K562 (cell line): ENCODE measurements at regions of chr11 and their contacts with region 1.

Region 1: DNA sequence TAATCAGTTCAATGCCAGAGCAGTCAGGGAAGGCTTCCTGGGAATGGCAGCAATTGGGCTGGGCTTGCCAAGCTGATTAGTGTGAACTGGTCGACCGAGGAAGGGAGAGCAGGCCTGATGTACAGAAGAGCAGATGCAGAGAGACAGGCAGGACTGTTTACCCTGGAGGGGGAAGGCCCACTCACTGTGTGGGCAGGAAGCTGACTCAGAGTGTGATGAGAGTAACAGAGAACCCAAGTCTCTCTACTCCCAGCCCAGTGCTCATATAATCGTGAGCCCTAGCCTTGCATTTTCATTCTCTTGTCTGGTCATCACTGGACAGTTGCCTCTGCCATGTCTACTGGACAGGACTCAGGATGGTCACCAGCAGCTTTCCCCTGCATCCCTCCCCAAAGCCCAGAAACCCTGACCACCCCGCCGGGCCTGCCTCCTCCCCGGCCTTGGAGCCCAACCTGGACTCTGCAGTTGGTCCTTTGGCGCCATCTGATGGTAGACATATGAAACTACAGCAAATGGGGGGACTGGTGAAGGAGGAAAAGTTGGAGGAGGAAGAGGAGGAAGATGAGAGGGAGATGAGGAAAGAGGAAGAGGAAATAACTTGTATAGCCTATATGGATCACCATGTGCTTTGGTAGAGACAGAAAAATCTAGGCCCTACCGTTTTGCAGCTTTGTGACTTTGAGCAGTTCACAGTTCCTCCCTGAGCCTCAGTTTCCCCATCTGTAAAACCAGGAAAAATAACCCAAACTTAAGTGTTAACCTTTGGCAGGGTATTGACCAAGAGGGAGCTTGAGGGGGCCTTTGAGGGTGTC is 43.4 kb upstream of the PRDM11 start:
- DNase-seq: peak; percentile 70 to 85 (median 80)
- ATAC-seq: peak; percentile 80
- H3K4me3 ChIP-seq: no peak overlapping the region
- H3K27ac ChIP-seq: no peak overlapping the region
- H3K4me1 ChIP-seq: no peaks in the 10 kb centered on the region; a peak in 1 of 5 replicates
- H3K27me3 ChIP-seq: peaks cover 0 to 12% of the 10 kb centered on the region in 2 experiments; a peak in 2 of 5 replicates
- CTCF ChIP-seq: peak; percentile 88 to 90 (median 88)
- EP300 ChIP-seq: no peak
- POLR2A ChIP-seq: no peak
- RAD21 ChIP-seq: peak; percentile 91 to 94

Region 2: GRCh38 chr11:44927174-44927661 is 175.8 kb before region 1 on chr11:
- CTCF ChIA-PET with region 1: interaction called, 12 read pairs
- POLR2A ChIA-PET with region 1: no interaction called
- in situ Hi-C with region 1: loop called (anchors 5 kb)
- intact Hi-C with region 1: loop called (anchors 1 kb)
- DNase-seq: peak; percentile 70 to 82 (median 78)
- ATAC-seq: peak; percentile 94
- H3K4me3 ChIP-seq: no peak overlapping the region
- H3K27ac ChIP-seq: no peak overlapping the region
- H3K4me1 ChIP-seq: peaks cover 0 to 2% of the 10 kb centered on the region in 2 experiments; a peak in 1 of 5 replicates
- H3K27me3 ChIP-seq: peaks cover 0 to 35% of the 10 kb centered on the region in 2 experiments; a peak in 2 of 5 replicates
- CTCF ChIP-seq: peak; percentile 80 to 86 (median 82)
- EP300 ChIP-seq: no peak
- POLR2A ChIP-seq: no peak
- RAD21 ChIP-seq: peak; percentile 28 to 73; a peak in 3 of 4 replicates

Region 3: DNA sequence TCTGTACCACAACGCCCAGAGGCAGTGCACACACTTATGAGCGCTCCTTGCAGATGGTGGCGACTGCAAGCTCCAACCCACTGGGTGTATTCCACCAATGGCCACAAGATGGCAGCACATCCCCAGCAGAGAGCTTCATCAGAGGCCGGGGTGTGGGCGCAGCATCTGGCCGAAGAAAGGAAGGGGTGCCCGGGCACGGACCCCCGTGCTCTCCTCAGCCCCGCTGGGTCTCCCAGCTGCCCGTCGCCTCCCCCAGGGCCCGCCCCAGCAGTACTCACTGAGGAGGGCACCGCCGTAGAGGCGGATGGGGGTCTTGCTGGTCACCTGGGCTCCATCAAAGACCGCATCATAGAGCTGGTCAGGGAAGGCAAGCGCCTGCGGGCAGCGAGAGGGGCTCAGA is 166.5 kb before region 1 on chr11:
- CTCF ChIA-PET with region 1: interaction called, 43 read pairs
- POLR2A ChIA-PET with region 1: interaction called, 10 read pairs
- in situ Hi-C with region 1: no loop called
- intact Hi-C with region 1: loop called (anchors 1 kb)
- DNase-seq: peak; percentile 75 to 83 (median 82)
- ATAC-seq: peak; percentile 92
- H3K4me3 ChIP-seq: no peak overlapping the region
- H3K27ac ChIP-seq: no peak overlapping the region
- H3K4me1 ChIP-seq: peaks cover 0 to 11% of the 10 kb centered on the region in 2 experiments; a peak in 1 of 5 replicates
- H3K27me3 ChIP-seq: peaks cover 0 to 23% of the 10 kb centered on the region in 2 experiments; a peak in 2 of 5 replicates
- CTCF ChIP-seq: peak; percentile 85 to 95 (median 91)
- EP300 ChIP-seq: no peak
- POLR2A ChIP-seq: no peak
- RAD21 ChIP-seq: peak; percentile 91 to 93

Region 4: DNA sequence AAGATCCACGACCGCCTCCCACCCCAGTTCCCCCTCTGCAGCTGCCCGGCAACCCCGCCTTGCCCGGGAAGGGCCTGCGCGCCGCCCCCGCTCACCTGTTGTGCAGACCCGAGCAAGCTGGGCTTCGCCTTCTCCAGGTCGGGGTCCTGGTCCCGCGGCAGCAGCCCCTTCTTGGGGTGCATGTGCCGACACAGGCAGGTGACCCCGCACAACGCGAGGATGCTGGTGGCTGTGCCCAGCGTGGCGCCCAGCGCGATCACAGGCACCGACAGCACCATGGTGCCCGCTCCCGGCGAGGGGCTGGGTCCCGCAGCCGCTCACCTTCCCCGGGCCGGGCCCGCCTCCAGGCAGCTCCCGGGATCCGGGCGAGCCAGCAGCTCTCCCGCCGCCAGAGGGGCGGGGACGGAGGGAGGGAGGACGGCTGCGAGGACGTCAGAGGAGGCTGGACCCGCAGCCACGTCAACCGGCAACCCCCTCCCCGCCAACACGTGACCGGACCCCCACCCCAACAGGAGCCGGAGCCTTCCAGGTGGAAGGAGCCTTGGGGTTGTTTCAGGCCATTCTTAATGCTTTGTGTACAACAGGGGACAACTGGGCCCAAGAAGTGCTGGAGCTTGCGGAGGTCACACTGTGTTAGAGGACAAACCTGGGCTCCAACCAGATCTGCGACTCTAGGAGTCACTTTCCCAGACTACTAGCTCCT is 183.1 kb after region 1 on chr11 and contains the start of gene SYT13:
- CTCF ChIA-PET with region 1: no interaction called
- POLR2A ChIA-PET with region 1: interaction called, 3 read pairs
- in situ Hi-C with region 1: loop called (anchors 25 kb)
- intact Hi-C with region 1: no loop called
- DNase-seq: no peak
- ATAC-seq: no peak
- H3K4me3 ChIP-seq: no peak within 1 kb of the TSS
- H3K27ac ChIP-seq: no peak within 1 kb of the TSS
- H3K4me1 ChIP-seq: peaks cover 0 to 5% of the 10 kb centered on the region in 2 experiments; a peak in 2 of 5 replicates
- H3K27me3 ChIP-seq: peaks cover 13 to 23% of the 10 kb centered on the region in 2 experiments; a peak in 3 of 5 replicates
- CTCF ChIP-seq: no peak
- EP300 ChIP-seq: no peak
- POLR2A ChIP-seq: no peak
- RAD21 ChIP-seq: no peak
- polyA plus RNA-seq, gene SYT13: 0.08 TPM in 1 of 2 experiments, not detected in the other

Region 5: DNA sequence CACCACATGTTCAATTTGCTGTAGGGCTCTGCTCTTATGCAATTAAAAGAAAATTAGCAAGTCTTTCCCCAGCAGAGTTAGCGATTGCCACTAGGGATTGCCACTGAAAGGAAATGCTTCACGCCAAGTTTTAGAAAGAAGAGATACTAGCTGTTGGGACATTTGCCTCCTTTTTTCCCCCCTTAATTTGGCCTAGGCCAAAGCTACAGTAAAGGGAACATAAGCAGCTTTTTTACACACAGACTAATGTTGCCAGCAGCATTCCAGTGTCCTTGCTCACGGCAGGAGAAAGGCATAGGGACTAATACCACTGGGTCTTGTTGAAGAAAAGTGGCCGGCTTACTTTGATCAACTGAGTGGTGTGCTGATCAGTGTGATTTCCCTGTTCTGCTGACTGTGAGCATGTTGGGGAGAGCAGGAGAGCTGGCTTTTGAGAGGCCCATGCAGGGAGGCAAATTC is 947.0 kb after region 1 on chr11:
- CTCF ChIA-PET with region 1: no interaction called
- POLR2A ChIA-PET with region 1: no interaction called
- in situ Hi-C with region 1: no loop called
- intact Hi-C with region 1: no loop called
- DNase-seq: no peak
- ATAC-seq: no peak
- H3K4me3 ChIP-seq: no peak overlapping the region
- H3K27ac ChIP-seq: no peak overlapping the region
- H3K4me1 ChIP-seq: peaks cover 0 to 12% of the 10 kb centered on the region in 2 experiments; a peak in 3 of 5 replicates
- H3K27me3 ChIP-seq: no peaks in the 10 kb centered on the region
- CTCF ChIP-seq: no peak
- EP300 ChIP-seq: no peak
- POLR2A ChIP-seq: no peak
- RAD21 ChIP-seq: no peak